Naive thymus-derived CD4-positive, alpha-beta T cell (primary cell): ENCODE measurements at regions of chr2 and their contacts with region 1.

Region 1: DNA sequence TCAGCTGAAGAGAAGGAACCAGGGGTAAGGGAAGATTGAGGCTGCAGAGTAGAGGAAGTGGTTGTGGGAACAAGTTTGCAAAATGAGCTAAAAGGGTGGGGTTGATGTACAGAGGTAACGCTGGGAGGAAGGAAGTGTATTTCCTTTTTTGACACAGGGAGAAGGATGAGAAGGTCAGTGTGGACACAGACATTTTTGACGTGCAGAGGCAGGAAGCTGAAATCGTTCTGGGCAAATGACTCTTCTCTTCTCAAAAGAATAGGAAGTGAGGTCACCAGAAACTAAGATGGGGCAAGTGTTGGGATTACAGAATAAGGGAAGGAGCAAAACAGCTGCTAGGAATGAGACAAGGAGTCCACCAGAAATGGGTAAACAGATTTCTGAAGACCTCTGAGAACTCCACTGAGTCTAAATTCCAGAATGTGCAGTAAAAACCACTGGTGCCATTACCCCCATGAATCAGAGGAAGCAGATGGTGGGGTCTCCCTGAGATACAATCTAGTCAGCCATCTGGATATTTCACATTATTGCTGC is 20.0 kb upstream of the RNF149 start:
- DNase-seq: peak in 7 of 9 donors; percentile 43 to 84 (median 81)
- ATAC-seq: peak; percentile 94
- H3K4me3 ChIP-seq: peak overlapping the region; percentile 43
- H3K4me3 Mint-ChIP-seq: no peak overlapping the region
- H3K27ac ChIP-seq: peak overlapping the region; percentile 49
- H3K27ac Mint-ChIP-seq: no peak overlapping the region
- H3K4me1 ChIP-seq: peaks cover 34 to 60% of the 10 kb centered on the region in 2 donors
- H3K4me1 Mint-ChIP-seq: peaks cover 8 to 29% (median 23%) of the 10 kb centered on the region in 7 donors
- H3K27me3 ChIP-seq: no peaks in the 10 kb centered on the region
- H3K27me3 Mint-ChIP-seq: no peaks in the 10 kb centered on the region

Region 2: GRCh38 chr2:101295895-101296294 is 32.6 kb before region 1 on chr2:
- CTCF ChIA-PET with region 1: interaction called, 5 read pairs
- POLR2A ChIA-PET with region 1: interaction called, 6 read pairs
- intact Hi-C with region 1: loop called in 1 of 2 experiments (anchors 5 kb)
- DNase-seq: no peak
- ATAC-seq: no peak
- H3K4me3 ChIP-seq: no peak overlapping the region
- H3K4me3 Mint-ChIP-seq: peak overlapping the region in 6 of 10 donors; percentile 7 to 53 (median 38)
- H3K27ac ChIP-seq: no peak overlapping the region
- H3K27ac Mint-ChIP-seq: peak overlapping the region in 3 of 9 donors; percentile 2 to 37 (median 11)
- H3K4me1 ChIP-seq: peaks cover 30 to 48% of the 10 kb centered on the region in 2 donors
- H3K4me1 Mint-ChIP-seq: peaks cover 42 to 81% (median 67%) of the 10 kb centered on the region in 7 donors
- H3K27me3 ChIP-seq: no peaks in the 10 kb centered on the region
- H3K27me3 Mint-ChIP-seq: no peaks in the 10 kb centered on the region

Region 3: DNA sequence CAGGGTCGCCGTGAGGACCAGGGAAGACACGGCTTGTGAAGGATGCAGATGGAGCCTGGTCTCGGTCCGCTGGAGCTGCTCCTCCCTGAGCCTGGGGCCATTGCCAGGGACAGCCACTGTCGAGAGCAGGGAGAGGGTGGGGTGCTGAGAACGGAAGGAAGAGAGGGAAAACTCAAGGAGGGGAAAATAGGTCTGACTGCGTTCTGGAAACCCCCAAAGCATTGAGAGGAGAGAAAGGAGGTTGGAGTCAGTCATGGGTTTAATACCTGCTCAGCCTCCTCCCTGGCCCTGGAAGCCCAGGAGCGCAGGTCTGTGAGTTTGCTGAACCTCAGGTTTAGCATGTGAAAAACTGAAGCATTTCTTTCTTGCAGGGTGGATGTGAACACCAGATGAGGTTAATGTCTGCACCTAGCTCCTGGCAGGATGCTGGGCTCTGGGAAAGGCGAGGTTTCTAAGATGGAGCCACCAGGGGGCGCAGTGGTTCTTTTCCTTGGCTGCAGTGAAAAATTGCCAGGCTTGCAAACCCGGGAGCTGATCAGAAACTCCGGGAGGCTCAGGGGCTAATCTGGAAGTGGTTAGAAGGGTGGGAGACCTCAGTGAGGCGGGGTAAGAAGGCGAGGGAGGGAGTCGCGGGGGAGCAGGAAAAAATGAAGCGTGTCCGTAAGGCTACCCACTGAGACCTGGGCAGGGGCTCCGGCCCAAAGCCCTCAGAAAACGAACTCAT is 13.5 kb after region 1 on chr2:
- CTCF ChIA-PET with region 1: interaction called, 49 read pairs
- POLR2A ChIA-PET with region 1: interaction called, 7 read pairs
- intact Hi-C with region 1: loop called in 1 of 2 experiments (anchors 1 kb)
- DNase-seq: peak; percentile 32 to 73 (median 51)
- ATAC-seq: peak; percentile 76
- H3K4me3 ChIP-seq: no peak overlapping the region
- H3K4me3 Mint-ChIP-seq: peak overlapping the region in 4 of 10 donors; percentile 10 to 63 (median 18)
- H3K27ac ChIP-seq: no peak overlapping the region
- H3K27ac Mint-ChIP-seq: peak overlapping the region in 5 of 9 donors; percentile 9 to 68 (median 31)
- H3K4me1 ChIP-seq: peaks cover 6 to 21% of the 10 kb centered on the region in 2 donors
- H3K4me1 Mint-ChIP-seq: peaks cover 24 to 43% (median 32%) of the 10 kb centered on the region in 7 donors
- H3K27me3 ChIP-seq: no peaks in the 10 kb centered on the region
- H3K27me3 Mint-ChIP-seq: peaks cover 0 to 20% (median 0%) of the 10 kb centered on the region in 5 donors

Region 4: GRCh38 chr2:101446869-101447268 is 118.3 kb after region 1 on chr2:
- CTCF ChIA-PET with region 1: no interaction called
- POLR2A ChIA-PET with region 1: no interaction called
- intact Hi-C with region 1: no loop called
- DNase-seq: no peak
- ATAC-seq: peak; percentile 88
- H3K4me3 ChIP-seq: no peak overlapping the region
- H3K4me3 Mint-ChIP-seq: no peak overlapping the region
- H3K27ac ChIP-seq: no peak overlapping the region
- H3K27ac Mint-ChIP-seq: no peak overlapping the region
- H3K4me1 ChIP-seq: peaks cover 0 to 8% of the 10 kb centered on the region in 2 donors
- H3K4me1 Mint-ChIP-seq: peaks cover 8 to 13% (median 9%) of the 10 kb centered on the region in 7 donors
- H3K27me3 ChIP-seq: no peaks in the 10 kb centered on the region
- H3K27me3 Mint-ChIP-seq: no peaks in the 10 kb centered on the region

Region 5: DNA sequence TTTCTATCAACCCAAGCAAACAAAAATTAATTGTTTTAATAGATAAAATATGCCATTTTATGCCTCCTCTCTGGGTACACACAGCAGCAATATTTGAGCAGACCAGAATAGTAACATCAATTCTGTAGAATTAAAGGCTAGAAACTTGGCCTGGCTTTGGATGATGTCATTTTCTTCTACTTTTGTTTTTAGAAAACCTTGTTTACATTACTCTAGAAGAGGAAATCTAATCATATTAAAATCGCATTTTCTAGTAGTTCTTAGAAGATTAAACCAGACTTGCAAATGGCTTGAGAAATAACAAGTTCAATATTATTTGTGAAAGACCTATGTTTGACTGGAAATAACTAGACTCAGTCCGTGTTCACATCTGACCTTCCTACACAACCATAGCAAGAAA is 248.6 kb after region 1 on chr2:
- CTCF ChIA-PET with region 1: no interaction called
- POLR2A ChIA-PET with region 1: interaction called, 7 read pairs
- intact Hi-C with region 1: loop called in 1 of 2 experiments (anchors 10 kb)
- DNase-seq: no peak
- ATAC-seq: no peak
- H3K4me3 ChIP-seq: no peak overlapping the region
- H3K4me3 Mint-ChIP-seq: no peak overlapping the region
- H3K27ac ChIP-seq: no peak overlapping the region
- H3K27ac Mint-ChIP-seq: peak overlapping the region in 1 of 9 donors; percentile 16
- H3K4me1 ChIP-seq: no peaks in the 10 kb centered on the region
- H3K4me1 Mint-ChIP-seq: peaks cover 17 to 63% (median 42%) of the 10 kb centered on the region in 7 donors
- H3K27me3 ChIP-seq: no peaks in the 10 kb centered on the region
- H3K27me3 Mint-ChIP-seq: peaks cover 0 to 2% (median 0%) of the 10 kb centered on the region in 5 donors